Psoas muscle (tissue), 8 donors: ENCODE measurements at regions of chr18 and their contacts with region 1.

Region 1: DNA sequence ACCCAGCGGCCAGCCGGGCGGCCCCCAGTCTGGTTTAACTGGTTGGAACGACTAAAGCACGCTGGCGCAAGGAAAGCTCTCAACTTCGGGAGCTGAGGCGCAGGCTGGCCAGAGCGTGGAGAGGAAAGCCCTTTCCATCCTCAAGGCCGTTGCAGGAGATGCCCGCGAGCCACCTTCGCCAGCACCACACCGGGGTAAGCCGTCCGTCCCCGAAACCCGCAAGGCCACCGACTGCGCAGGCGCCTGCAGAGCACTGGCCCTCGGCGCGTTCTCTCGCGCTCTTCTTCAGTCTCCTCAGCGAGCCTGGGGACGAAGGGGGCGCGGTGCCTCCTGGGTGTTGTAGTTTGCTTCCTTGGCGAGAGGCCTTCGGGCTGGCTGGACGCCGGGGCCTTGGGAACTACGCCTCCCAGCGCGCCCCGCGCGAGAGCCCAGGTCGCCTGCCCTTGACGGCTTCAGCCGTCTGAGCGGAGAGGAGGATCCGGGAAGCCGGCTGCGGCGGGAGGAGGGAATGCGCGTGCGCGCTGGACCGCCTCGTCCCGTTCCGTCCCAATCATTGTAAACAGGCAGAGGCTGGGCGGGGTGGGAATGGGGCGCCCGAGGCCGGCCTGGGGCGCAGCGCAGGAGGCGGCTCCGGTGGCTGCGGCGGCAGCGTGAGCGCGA is at the start of gene RALBP1:
- DNase-seq: peak; percentile 100
- ATAC-seq: peak; percentile 97 to 99 (median 98)
- H3K4me3 ChIP-seq: peak within 1 kb of the TSS; percentile 87
- H3K27ac ChIP-seq: peak within 1 kb of the TSS; percentile 87
- H3K4me1 ChIP-seq: peaks cover 6% of the 10 kb centered on the region
- H3K27me3 ChIP-seq: no peaks in the 10 kb centered on the region
- CTCF ChIP-seq: no peak
- total RNA-seq, gene RALBP1: 28.7 to 42.6 (median 39.6) TPM

Region 2: GRCh38 chr18:9334329-9334972 is 140.7 kb before region 1 on chr18 and contains the start of gene TWSG1:
- intact Hi-C with region 1: loop called in 1 of 2 experiments (anchors 5 kb)
- DNase-seq: peak; percentile 94 to 97
- ATAC-seq: peak; percentile 93 to 96 (median 96)
- H3K4me3 ChIP-seq: peak within 1 kb of the TSS; percentile 91
- H3K27ac ChIP-seq: peak within 1 kb of the TSS; percentile 80
- H3K4me1 ChIP-seq: peaks cover 11% of the 10 kb centered on the region
- H3K27me3 ChIP-seq: no peaks in the 10 kb centered on the region
- CTCF ChIP-seq: peak; percentile 36
- total RNA-seq, gene TWSG1: 6.2 to 8.5 (median 7.7) TPM

Region 3: DNA sequence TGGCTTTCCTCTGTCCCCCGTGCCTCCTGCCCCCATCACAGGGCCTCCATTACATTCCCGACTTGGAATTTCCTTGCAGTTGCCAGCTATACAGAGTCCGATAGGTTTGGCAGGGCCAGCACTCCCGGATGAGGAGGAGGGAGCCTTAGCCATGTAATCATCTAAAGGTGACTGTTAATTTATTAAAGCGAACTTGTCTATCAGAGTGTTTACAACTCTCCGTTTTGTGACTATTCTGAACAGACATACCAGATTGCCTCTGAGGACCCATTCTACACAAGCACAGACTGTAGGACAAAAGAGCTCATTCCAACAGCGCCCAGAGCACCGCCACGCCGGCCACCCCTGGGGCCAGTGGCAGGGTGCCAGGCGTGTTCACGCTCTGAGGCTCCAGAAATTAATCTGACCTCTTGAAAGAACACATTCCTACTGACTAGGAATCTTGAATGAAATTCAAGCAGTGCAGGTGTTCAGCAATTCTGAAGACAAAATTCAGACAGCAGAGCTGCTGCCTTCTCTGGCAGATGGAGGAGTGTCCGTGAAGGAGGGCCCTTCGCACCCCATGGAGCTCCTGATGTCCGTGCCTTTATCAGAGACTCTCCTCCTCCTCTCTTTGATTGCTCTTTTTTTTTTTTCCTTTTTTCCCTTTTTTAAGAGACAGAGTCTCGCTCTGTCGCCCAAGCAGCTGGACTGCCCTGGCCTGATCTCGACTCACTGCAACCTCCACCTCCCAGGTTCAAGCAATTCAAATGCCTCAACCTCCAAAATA is 57.9 kb before region 1 on chr18:
- intact Hi-C with region 1: loop called in 1 of 2 experiments (anchors 5 kb)
- DNase-seq: peak; percentile 39 to 65
- ATAC-seq: peak; percentile 36 to 74 (median 52)
- H3K4me3 ChIP-seq: peak overlapping the region; percentile 39
- H3K27ac ChIP-seq: no peak overlapping the region
- H3K4me1 ChIP-seq: peaks cover 11% of the 10 kb centered on the region
- H3K27me3 ChIP-seq: no peaks in the 10 kb centered on the region
- CTCF ChIP-seq: no peak